ENCODE measurements at regions of chr19 and their contacts with region 1.

Region 1: GRCh38 chr19:40750059-40750873 is at the start of gene ACTMAP:
- DNase-seq: peak; percentile 100
- H3K4me3 ChIP-seq: peak within 1 kb of the TSS; percentile 65 to 82 (median 72)
- H3K27ac ChIP-seq: peak within 1 kb of the TSS; percentile 89 to 98 (median 92)
- H3K4me1 ChIP-seq: peaks cover 45 to 61% (median 58%) of the 10 kb centered on the region in 4 donors
- H3K27me3 ChIP-seq: no peaks in the 10 kb centered on the region
- CTCF ChIP-seq: no peak
- EP300 ChIP-seq: no peak
- POLR2A ChIP-seq: peak; percentile 64
- total RNA-seq, gene ACTMAP: 1.7 to 4.6 (median 3.7) TPM

Region 2: DNA sequence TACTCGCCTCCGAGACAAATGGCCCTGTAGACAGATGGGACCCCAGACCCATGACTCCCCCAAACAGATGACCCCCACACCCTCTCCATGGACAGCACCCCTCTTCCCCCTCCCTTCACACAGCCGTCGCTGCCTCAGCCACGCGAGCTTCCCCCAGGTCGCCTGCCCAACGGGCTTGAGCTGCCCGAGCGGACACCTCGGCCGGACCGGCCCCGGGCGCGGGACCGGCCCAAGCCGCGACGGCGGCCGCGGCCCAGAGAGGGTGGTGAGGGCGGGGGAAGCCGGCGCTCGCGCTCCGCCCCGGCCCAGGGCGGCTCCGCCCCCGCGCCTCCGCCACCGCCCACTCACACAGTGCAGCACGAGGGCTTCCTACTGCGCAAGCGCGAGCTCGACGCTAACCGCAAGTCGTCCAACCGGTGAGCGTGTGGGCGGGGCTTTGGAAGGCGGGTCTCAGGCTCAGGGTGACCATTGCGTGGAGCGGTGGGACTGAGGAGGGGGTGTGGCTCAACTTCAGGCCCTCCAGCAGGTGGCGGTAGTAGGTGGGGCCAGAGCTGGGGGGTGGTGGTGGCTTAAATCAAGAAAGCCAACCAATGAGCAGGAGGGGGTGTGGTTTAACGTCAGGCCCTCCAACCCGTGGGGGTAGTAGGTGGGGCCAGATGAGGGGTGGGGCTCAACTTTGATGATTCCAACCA is 179.8 kb before region 1 on chr19:
- intact Hi-C with region 1: no loop called
- DNase-seq: peak; percentile 100
- H3K4me3 ChIP-seq: peak overlapping the region; percentile 46 to 62 (median 52)
- H3K27ac ChIP-seq: peak overlapping the region; percentile 68 to 71 (median 68)
- H3K4me1 ChIP-seq: peaks cover 13 to 29% (median 26%) of the 10 kb centered on the region in 4 donors
- H3K27me3 ChIP-seq: peaks cover 5 to 36% (median 28%) of the 10 kb centered on the region in 4 donors
- CTCF ChIP-seq: peak in 1 of 3 experiments; percentile 48
- EP300 ChIP-seq: no peak
- POLR2A ChIP-seq: no peak

Region 3: GRCh38 chr19:40650749-40651305 is 99.4 kb before region 1 on chr19:
- intact Hi-C with region 1: no loop called
- DNase-seq: no peak
- H3K4me3 ChIP-seq: no peak overlapping the region
- H3K27ac ChIP-seq: peak overlapping the region; percentile 51 to 79 (median 70)
- H3K4me1 ChIP-seq: peaks cover 30 to 37% (median 34%) of the 10 kb centered on the region in 4 donors
- H3K27me3 ChIP-seq: no peaks in the 10 kb centered on the region
- CTCF ChIP-seq: no peak
- EP300 ChIP-seq: no peak
- POLR2A ChIP-seq: no peak

Region 4: DNA sequence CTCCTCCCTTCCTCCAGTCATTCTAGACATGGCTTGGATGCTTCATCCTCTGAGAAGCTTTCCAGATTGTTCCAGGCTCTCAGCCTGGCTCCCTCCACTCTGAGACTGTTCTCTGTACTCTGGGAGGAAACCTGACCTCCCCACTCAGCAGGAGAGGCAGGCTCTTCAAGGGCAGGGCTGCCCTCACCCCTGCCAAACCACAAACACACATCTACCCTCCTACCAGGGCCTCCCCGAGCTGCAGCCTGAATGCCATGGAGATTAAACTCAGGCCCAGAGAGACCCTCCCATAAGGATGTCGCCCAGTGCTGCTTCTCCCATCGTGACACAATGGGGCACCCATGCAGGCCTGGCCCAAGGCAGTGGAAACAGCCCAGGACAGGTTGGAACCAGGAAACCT is 76.0 kb before region 1 on chr19:
- intact Hi-C with region 1: no loop called
- DNase-seq: no peak
- H3K4me3 ChIP-seq: no peak overlapping the region
- H3K27ac ChIP-seq: no peak overlapping the region
- H3K4me1 ChIP-seq: peaks cover 0 to 4% (median 0%) of the 10 kb centered on the region in 4 donors
- H3K27me3 ChIP-seq: no peaks in the 10 kb centered on the region
- CTCF ChIP-seq: no peak
- EP300 ChIP-seq: no peak
- POLR2A ChIP-seq: no peak

Region 5: DNA sequence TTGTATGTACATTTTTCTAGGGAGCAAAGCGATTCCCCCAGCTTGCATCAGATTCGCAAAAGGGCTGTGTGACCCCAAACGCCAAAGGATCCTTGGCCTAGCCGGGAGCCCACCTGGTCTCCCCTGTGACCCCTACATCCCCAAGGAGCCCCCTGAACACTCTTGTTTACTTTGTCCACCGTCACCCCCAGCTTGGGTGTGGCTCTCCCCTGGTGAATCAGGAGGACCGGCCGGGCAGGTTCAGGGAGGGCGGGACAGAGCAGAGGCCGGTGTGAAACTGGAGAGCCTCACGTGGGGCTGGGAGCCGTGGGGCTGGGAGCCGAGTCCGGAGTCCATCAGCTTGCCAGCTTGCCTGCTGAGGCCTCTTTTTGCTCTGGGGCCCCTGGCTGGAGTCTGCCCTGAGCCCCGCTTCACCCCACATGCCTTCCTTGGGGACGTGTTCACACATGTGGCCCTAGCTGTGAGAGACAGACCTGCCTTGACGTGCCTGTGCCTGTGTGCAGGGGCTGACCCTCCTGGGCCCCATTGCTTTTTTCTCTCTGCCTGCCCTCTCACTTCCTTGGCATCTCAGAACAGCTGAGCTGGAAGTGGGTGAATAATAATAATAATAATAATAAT is 31.4 kb before region 1 on chr19:
- intact Hi-C with region 1: loop called (anchors 2 kb)
- DNase-seq: no peak
- H3K4me3 ChIP-seq: peak overlapping the region; percentile 73 to 92 (median 78)
- H3K27ac ChIP-seq: peak overlapping the region; percentile 95 to 99 (median 98)
- H3K4me1 ChIP-seq: peaks cover 36 to 89% (median 84%) of the 10 kb centered on the region in 4 donors
- H3K27me3 ChIP-seq: no peaks in the 10 kb centered on the region
- CTCF ChIP-seq: no peak
- EP300 ChIP-seq: no peak
- POLR2A ChIP-seq: peak; percentile 35

Region 6: DNA sequence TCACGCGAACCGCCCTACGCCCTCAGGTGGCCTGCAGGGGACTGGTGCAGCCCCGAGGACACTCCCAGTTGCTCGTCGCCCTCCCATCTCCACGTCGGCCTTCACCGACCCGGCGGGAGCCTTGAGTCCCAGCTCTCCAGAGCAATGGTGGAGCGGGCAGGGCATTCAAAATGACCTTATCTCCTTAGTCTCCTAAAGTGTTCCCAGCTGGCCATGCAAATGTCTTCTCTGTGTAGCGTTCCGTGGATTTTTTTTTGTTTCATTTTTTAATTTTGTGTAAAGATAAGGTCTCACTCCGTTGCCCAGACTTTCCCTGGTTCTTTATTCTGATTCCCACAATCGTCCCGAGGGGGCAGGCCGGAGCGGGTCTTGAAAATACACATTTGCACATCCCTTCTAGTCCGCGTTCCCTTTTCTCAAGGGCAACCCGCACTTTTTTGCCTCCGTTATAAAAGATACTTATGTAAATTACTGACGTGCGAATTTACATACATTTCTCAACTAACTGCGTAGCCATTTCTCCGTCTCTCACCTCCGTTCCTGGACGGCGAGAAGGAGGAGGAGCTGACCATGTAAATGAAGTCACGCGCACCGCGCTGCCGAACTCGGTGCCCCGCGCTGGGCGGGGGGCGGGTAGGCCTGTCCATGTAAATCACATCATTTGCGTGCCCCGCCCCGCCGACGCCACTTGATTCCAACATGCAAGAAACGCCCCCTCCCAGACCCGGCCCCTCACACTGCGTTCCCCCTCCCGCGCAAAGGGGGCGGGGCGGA is 48.1 kb after region 1 on chr19:
- intact Hi-C with region 1: loop called (anchors 5 kb)
- DNase-seq: peak; percentile 100
- H3K4me3 ChIP-seq: peak overlapping the region; percentile 77 to 99 (median 98)
- H3K27ac ChIP-seq: peak overlapping the region; percentile 95 to 99 (median 96)
- H3K4me1 ChIP-seq: peaks cover 40 to 47% (median 45%) of the 10 kb centered on the region in 4 donors
- H3K27me3 ChIP-seq: no peaks in the 10 kb centered on the region
- CTCF ChIP-seq: peak; percentile 36 to 57 (median 52)
- EP300 ChIP-seq: no peak
- POLR2A ChIP-seq: no peak

Region 7: DNA sequence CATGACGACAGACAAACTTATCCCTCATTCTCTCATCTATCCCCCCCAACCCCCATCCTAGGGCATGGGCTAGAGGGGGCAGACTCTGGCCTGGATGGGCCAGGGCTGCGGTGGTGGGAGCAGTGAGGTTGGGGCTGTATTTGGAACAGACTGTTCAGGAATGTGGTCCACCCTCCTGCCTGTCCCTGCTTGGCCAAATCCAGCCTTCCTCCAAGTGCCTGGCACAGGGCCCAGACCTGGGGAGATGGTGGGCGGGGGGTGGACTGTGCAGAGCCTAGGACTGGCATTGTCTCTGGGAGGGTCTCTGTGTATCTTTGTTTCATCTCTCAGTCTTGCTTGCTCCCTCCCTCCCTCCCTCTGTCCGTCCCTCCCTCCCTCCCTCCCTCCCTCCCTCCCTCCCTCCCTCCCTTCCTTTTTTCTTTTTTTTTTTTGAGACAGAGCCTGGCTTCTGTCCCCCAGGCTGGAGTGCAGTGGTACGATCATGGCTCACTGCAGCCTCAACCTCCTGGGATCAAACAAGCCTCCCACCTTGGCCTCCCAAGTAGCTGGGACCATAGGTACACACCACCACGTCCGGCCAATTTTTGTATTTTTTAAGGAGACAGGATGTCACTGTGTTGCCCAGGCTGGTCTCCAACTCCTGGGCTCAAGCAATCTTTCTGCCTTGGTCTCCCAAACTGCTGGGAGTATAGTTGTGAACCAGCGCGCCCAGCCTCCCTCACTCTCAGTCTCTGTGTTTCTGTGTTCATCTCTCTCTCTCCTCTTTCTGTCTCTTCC is 63.1 kb after region 1 on chr19:
- intact Hi-C with region 1: loop called (anchors 5 kb)
- DNase-seq: no peak
- H3K4me3 ChIP-seq: no peak overlapping the region
- H3K27ac ChIP-seq: peak overlapping the region in 1 of 4 donors; percentile 36
- H3K4me1 ChIP-seq: peaks cover 41 to 56% (median 55%) of the 10 kb centered on the region in 4 donors
- H3K27me3 ChIP-seq: no peaks in the 10 kb centered on the region
- CTCF ChIP-seq: no peak
- EP300 ChIP-seq: no peak
- POLR2A ChIP-seq: no peak

Region 8: DNA sequence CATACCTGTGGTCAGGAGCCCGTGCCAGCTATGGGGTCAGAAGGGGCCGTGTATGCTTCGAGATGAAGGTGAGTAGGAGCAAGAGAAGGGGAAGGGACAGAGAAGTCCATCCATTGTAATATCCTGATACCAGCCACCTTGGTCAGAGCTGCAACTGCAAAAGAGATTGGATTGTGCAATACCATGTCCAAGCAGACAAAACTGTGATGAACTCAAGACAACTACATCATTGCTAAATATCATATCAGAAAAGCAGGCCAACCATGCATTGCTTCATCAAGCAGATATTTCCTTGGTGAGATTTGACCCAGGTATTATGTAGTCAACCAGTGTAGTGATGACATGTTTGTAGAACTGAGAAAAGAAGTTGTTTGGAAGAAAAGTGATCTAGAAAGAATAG is 526.0 kb after region 1 on chr19:
- intact Hi-C with region 1: no loop called
- DNase-seq: no peak
- H3K4me3 ChIP-seq: no peak overlapping the region
- H3K27ac ChIP-seq: no peak overlapping the region
- H3K4me1 ChIP-seq: no peaks in the 10 kb centered on the region
- H3K27me3 ChIP-seq: no peaks in the 10 kb centered on the region
- CTCF ChIP-seq: no peak
- EP300 ChIP-seq: no peak
- POLR2A ChIP-seq: no peak